SK-N-SH (cell line): ENCODE measurements at regions of chrX and their contacts with region 1.

Region 1: DNA sequence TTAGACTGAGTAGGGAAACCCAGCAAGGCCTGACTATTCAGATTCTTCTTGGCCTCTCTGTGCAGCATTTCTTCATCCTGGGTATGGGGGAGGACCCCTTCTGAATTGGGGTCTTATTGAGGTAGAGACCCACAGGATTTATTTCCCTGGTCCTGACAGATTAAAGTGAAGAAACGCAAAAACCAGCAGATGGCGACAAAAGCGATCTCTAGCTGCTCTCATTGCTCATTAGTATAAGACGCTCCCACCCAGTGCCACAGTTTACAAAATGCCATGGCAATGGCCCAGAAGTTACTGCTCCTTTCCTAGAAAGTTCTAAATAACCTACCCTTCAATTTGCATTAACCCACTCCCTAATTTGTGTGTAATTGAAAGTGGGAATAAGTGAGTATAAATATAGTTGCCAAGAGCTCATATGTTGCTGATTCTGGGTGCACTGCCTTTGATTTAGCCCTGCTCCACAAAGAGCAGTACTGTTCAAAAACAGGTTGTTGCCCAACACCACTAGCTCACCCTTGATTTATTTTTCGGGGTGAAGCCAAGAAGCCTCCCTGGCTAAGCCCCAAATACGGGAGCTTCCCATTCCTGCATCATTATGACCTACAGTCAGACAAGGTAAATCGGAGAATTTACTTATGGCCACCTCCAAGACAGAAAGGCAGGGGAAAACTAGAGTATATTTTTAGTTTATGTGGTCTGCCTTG is 3.7 kb upstream of the BEX4 start:
- DNase-seq: peak; percentile 60
- H3K4me3 ChIP-seq: no peak overlapping the region
- H3K27ac ChIP-seq: no peak overlapping the region
- H3K4me1 ChIP-seq: no peaks in the 10 kb centered on the region
- H3K27me3 ChIP-seq: no peaks in the 10 kb centered on the region; the same call in 1 of the 2 replicates
- CTCF ChIP-seq: peak; percentile 73
- EP300 ChIP-seq: no peak
- RAD21 ChIP-seq: peak; percentile 62

Region 2: GRCh38 chrX:103197721-103198306 is 13.3 kb before region 1 on chrX:
- CTCF ChIA-PET with region 1: interaction called, 21 read pairs
- POLR2A ChIA-PET with region 1: no interaction called
- DNase-seq: no peak
- H3K4me3 ChIP-seq: no peak overlapping the region
- H3K27ac ChIP-seq: no peak overlapping the region
- H3K4me1 ChIP-seq: no peaks in the 10 kb centered on the region
- H3K27me3 ChIP-seq: no peaks in the 10 kb centered on the region
- CTCF ChIP-seq: no peak
- EP300 ChIP-seq: no peak
- RAD21 ChIP-seq: no peak

Region 3: GRCh38 chrX:103254921-103255493 is 43.8 kb after region 1 on chrX and contains the start of gene TCEAL8:
- CTCF ChIA-PET with region 1: interaction called, 16 read pairs
- POLR2A ChIA-PET with region 1: interaction called, 3 read pairs
- DNase-seq: peak; percentile 60
- H3K4me3 ChIP-seq: peak within 1 kb of the TSS; percentile 74 to 75
- H3K27ac ChIP-seq: peak within 1 kb of the TSS; percentile 78 to 87
- H3K4me1 ChIP-seq: peaks cover 0 to 3% of the 10 kb centered on the region in 2 experiments; a peak in 2 of 4 replicates
- H3K27me3 ChIP-seq: no peaks in the 10 kb centered on the region
- CTCF ChIP-seq: no peak
- EP300 ChIP-seq: no peak
- RAD21 ChIP-seq: no peak
- polyA plus RNA-seq, gene TCEAL8: 36.5 and 43.5 TPM in 2 replicates

Region 4: GRCh38 chrX:103413705-103414387 is 202.7 kb after region 1 on chrX:
- CTCF ChIA-PET with region 1: no interaction called
- POLR2A ChIA-PET with region 1: no interaction called
- DNase-seq: no peak
- H3K4me3 ChIP-seq: no peak overlapping the region
- H3K27ac ChIP-seq: no peak overlapping the region
- H3K4me1 ChIP-seq: no peaks in the 10 kb centered on the region
- H3K27me3 ChIP-seq: no peaks in the 10 kb centered on the region
- CTCF ChIP-seq: no peak
- EP300 ChIP-seq: no peak
- RAD21 ChIP-seq: no peak

Region 5: GRCh38 chrX:103656632-103657031 is 445.5 kb after region 1 on chrX:
- CTCF ChIA-PET with region 1: no interaction called
- POLR2A ChIA-PET with region 1: no interaction called
- DNase-seq: no peak
- H3K4me3 ChIP-seq: no peak overlapping the region
- H3K27ac ChIP-seq: peak overlapping the region in 1 of 2 experiments; percentile 86; a peak in 2 of 4 replicates
- H3K4me1 ChIP-seq: no peaks in the 10 kb centered on the region
- H3K27me3 ChIP-seq: peaks cover 4% of the 10 kb centered on the region; the same call in 1 of the 2 replicates
- CTCF ChIP-seq: no peak
- EP300 ChIP-seq: peak in 1 of 2 experiments; percentile 68; a peak in 1 of 4 replicates
- RAD21 ChIP-seq: no peak